Testis (tissue), 5 donors: ENCODE measurements at regions of chr5 and their contacts with region 1.

Region 1: GRCh38 chr5:172714491-172715421 is 56.2 kb downstream of the DUSP1 start:
- DNase-seq: peak; percentile 85
- H3K4me3 ChIP-seq: no peak overlapping the region
- H3K27ac ChIP-seq: peak overlapping the region; percentile 8 to 42
- H3K4me1 ChIP-seq: peaks cover 6% of the 10 kb centered on the region
- H3K27me3 ChIP-seq: no peaks in the 10 kb centered on the region
- CTCF ChIP-seq: peak; percentile 66 to 91 (median 84)
- POLR2A ChIP-seq: no peak

Region 2: GRCh38 chr5:172932313-172933017 is 217.7 kb after region 1 on chr5:
- intact Hi-C with region 1: loop called (anchors 5 kb)
- DNase-seq: peak; percentile 83
- H3K4me3 ChIP-seq: no peak overlapping the region
- H3K27ac ChIP-seq: peak overlapping the region in 1 of 2 donors; percentile 67
- H3K4me1 ChIP-seq: peaks cover 9% of the 10 kb centered on the region
- H3K27me3 ChIP-seq: no peaks in the 10 kb centered on the region
- CTCF ChIP-seq: peak; percentile 93 to 96 (median 93)
- POLR2A ChIP-seq: no peak

Region 3: GRCh38 chr5:173315495-173316350 is 601.0 kb after region 1 on chr5:
- intact Hi-C with region 1: no loop called
- DNase-seq: peak; percentile 74
- H3K4me3 ChIP-seq: no peak overlapping the region
- H3K27ac ChIP-seq: peak overlapping the region; percentile 47 to 53
- H3K4me1 ChIP-seq: peaks cover 30% of the 10 kb centered on the region
- H3K27me3 ChIP-seq: no peaks in the 10 kb centered on the region
- CTCF ChIP-seq: no peak
- POLR2A ChIP-seq: no peak